ENCODE measurements at regions of chr2 and their contacts with region 1.

Region 1: GRCh38 chr2:85266146-85267041 is 61.4 kb downstream of the TGOLN2 start:
- DNase-seq: peak; percentile 41
- ATAC-seq: peak; percentile 84; the same call in 1 of the 2 replicates
- H3K4me3 ChIP-seq: no peak overlapping the region
- H3K27ac ChIP-seq: peak overlapping the region; percentile 37; the same call in 1 of the 2 replicates
- H3K4me1 ChIP-seq: peaks cover 23% of the 10 kb centered on the region
- H3K27me3 ChIP-seq: no peaks in the 10 kb centered on the region
- CTCF ChIP-seq: peak; percentile 94

Region 2: GRCh38 chr2:84925724-84926376 is 340.5 kb before region 1 on chr2:
- CTCF ChIA-PET with region 1: no interaction called
- POLR2A ChIA-PET with region 1: interaction called, 10 read pairs
- in situ Hi-C with region 1: no loop called
- intact Hi-C with region 1: no loop called
- DNase-seq: peak; percentile 97
- ATAC-seq: peak; percentile 91
- H3K4me3 ChIP-seq: peak overlapping the region; percentile 62 to 79
- H3K27ac ChIP-seq: peak overlapping the region; percentile 60
- H3K4me1 ChIP-seq: peaks cover 17% of the 10 kb centered on the region
- H3K27me3 ChIP-seq: no peaks in the 10 kb centered on the region
- CTCF ChIP-seq: peak; percentile 100

Region 3: GRCh38 chr2:85291425-85292023 is 25.1 kb after region 1 on chr2:
- CTCF ChIA-PET with region 1: no interaction called
- POLR2A ChIA-PET with region 1: no interaction called
- in situ Hi-C with region 1: no loop called
- intact Hi-C with region 1: no loop called
- DNase-seq: no peak
- ATAC-seq: no peak
- H3K4me3 ChIP-seq: peak overlapping the region in 1 of 2 experiments; percentile 9; a peak in 2 of 4 replicates
- H3K27ac ChIP-seq: no peak overlapping the region
- H3K4me1 ChIP-seq: peaks cover 13% of the 10 kb centered on the region
- H3K27me3 ChIP-seq: no peaks in the 10 kb centered on the region
- CTCF ChIP-seq: no peak

Region 4: GRCh38 chr2:85390941-85391669 is 124.7 kb after region 1 on chr2:
- CTCF ChIA-PET with region 1: no interaction called
- POLR2A ChIA-PET with region 1: no interaction called
- in situ Hi-C with region 1: no loop called
- intact Hi-C with region 1: no loop called
- DNase-seq: no peak
- ATAC-seq: peak; percentile 86
- H3K4me3 ChIP-seq: no peak overlapping the region
- H3K27ac ChIP-seq: no peak overlapping the region
- H3K4me1 ChIP-seq: no peaks in the 10 kb centered on the region
- H3K27me3 ChIP-seq: no peaks in the 10 kb centered on the region
- CTCF ChIP-seq: peak; percentile 94

Measured in Panc1 (cell line).